Adrenal gland (tissue), 19 donors: ENCODE measurements at regions of chr4 and their contacts with region 1.

Region 1: DNA sequence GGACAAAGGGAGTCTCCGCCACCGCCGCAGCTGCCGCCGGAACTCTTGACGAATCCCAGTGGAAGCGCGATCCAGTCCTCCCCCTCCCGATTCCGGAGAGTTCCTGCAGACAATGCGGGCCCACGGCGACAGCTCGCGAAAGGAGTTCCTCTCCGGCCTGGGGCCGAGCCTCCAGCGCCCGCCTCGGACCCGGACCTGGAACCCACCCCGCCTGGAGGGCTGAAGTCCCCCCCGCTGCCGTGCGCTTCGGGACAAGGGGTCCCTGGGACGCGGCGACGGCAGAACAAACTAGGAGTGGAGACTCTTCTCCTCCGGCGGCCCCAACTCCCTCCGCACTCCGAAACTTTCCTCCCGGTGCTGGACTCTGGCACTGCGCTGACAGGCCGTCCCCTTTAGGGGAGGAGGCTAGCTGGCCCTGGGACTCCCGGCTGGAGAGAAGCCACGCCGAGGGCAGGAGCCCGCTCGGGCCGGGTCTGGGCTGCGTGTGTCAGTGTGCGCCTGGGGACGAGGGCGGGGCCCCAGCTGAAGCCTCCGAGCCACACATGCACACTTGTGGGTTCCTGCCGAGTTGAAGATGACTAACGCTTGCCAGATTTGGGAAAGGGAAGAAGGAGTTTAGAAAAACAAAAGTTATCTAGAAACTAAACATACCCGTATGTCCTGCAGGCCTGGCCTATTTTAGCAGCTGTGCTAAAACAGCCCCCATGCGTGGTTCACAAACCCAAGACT is at the start of gene ANTXR2:
- DNase-seq: peak; percentile 91 to 96 (median 96)
- H3K4me3 ChIP-seq: peak within 1 kb of the TSS; percentile 73 to 95 (median 92)
- H3K27ac ChIP-seq: peak within 1 kb of the TSS; percentile 82 to 96 (median 96)
- H3K4me1 ChIP-seq: peaks cover 23 to 59% of the 10 kb centered on the region in 2 donors
- H3K27me3 ChIP-seq: no peaks in the 10 kb centered on the region
- CTCF ChIP-seq: peak in 5 of 6 experiments; percentile 5 to 27 (median 12)
- POLR2A ChIP-seq: peak; percentile 72 to 94
- total RNA-seq, gene ANTXR2: 12.6 to 96.6 (median 61.3) TPM

Region 2: GRCh38 chr4:79923281-79923680 is 149.6 kb before region 1 on chr4:
- intact Hi-C with region 1: loop called in 1 of 2 experiments (anchors 10 kb)
- DNase-seq: no peak
- H3K4me3 ChIP-seq: no peak overlapping the region
- H3K27ac ChIP-seq: no peak overlapping the region
- H3K4me1 ChIP-seq: no peaks in the 10 kb centered on the region
- H3K27me3 ChIP-seq: no peaks in the 10 kb centered on the region
- CTCF ChIP-seq: no peak
- POLR2A ChIP-seq: no peak

Region 3: DNA sequence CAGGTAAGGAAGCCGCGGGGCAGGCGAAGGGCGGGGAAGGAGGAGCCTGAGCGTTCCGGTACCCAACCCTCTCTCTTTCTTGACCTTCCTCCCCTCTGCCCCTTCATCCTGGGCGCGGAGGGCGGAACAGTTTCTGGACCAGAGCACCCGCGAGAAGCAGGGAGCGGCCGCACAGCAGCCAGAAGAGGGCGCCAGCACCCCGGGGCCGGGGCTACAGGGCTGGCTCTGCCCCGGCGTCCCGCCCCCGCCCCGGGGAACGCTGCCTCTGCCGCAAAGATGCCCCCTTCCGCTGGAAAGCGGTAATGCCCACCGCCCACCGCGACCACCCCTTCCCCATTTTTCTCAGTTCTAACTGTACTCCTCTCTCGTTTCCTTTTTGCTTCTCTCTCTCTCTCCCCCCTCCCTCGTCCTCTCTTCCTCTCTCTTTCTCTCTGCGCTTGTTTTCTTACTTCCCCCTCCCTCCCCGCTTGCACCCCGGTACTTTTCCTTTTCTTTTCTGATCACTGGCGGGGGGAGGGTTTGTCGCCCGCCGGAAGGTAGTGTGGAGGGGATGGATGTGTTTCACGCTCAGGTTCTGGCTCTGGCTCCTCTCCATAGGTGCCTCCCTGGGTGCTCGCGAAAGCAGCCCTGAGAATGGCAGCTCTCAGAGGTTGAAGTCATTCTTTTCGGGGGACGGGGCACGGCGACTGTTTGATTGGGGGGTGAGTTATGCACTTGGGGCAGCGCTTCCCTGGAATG is 111.3 kb after region 1 on chr4:
- intact Hi-C with region 1: loop called in 1 of 2 experiments (anchors 5 kb)
- DNase-seq: peak; percentile 63 to 88 (median 82)
- H3K4me3 ChIP-seq: peak overlapping the region in 3 of 4 donors; percentile 22 to 82 (median 36)
- H3K27ac ChIP-seq: peak overlapping the region in 2 of 5 donors; percentile 53 to 69
- H3K4me1 ChIP-seq: peaks cover 15 to 20% of the 10 kb centered on the region in 2 donors
- H3K27me3 ChIP-seq: peaks cover 26% of the 10 kb centered on the region
- CTCF ChIP-seq: peak; percentile 61 to 91 (median 71)
- POLR2A ChIP-seq: no peak

Region 4: GRCh38 chr4:80362578-80363181 is 289.8 kb after region 1 on chr4:
- intact Hi-C with region 1: no loop called
- DNase-seq: peak in 2 of 7 donors; percentile 5 to 23
- H3K4me3 ChIP-seq: no peak overlapping the region
- H3K27ac ChIP-seq: no peak overlapping the region
- H3K4me1 ChIP-seq: no peaks in the 10 kb centered on the region
- H3K27me3 ChIP-seq: no peaks in the 10 kb centered on the region
- CTCF ChIP-seq: peak in 3 of 6 experiments; percentile 17 to 41 (median 28)
- POLR2A ChIP-seq: no peak